ENCODE measurements at regions of chr3 and their contacts with region 1.

Region 1: DNA sequence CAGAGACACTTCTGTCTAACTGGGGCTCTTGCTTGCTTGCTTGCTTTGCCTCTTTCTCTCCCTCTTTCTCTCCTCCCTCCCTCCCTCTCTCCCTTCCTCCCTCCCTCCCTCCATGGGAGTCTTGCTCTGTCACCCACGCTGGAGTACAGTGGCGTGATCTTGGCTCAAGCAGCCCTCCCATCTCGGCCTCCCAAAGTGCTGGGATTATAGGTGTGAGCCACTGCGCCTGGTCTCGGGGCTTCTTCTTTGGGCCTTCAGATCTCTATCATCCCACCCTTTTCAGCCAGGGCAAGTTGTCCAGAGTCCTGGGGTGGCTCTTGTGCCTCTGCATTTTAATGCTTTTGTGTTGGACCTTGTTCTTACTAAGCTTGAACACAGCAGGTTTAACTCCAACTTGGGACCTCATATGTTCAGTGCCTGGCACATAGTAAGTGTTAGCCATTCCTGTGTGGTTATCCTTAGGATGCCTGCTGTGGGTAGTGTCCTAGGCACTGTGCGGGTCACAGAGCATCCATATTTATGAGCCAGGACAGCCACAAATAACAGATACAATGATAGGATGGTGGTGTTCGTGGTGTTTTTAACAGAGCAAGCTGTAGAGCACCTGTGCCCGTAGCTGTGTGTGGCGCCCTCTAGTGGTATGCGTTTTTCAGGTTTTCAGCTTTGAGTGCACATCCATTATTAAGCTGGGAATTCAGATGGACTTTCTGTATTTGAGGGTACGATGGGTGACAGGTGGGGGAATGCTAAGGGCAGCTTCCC is 75.1 kb downstream of the CCK start:
- DNase-seq: peak; percentile 30 to 70 (median 57)
- ATAC-seq: peak; percentile 75
- H3K4me3 ChIP-seq: no peak overlapping the region
- H3K4me3 Mint-ChIP-seq: no peak overlapping the region
- H3K27ac ChIP-seq: no peak overlapping the region
- H3K27ac Mint-ChIP-seq: peak overlapping the region in 5 of 9 donors; percentile 22 to 69 (median 25)
- H3K4me1 ChIP-seq: peaks cover 5 to 9% of the 10 kb centered on the region in 2 donors
- H3K4me1 Mint-ChIP-seq: peaks cover 8 to 38% (median 15%) of the 10 kb centered on the region in 7 donors
- H3K27me3 ChIP-seq: no peaks in the 10 kb centered on the region
- H3K27me3 Mint-ChIP-seq: no peaks in the 10 kb centered on the region

Region 2: DNA sequence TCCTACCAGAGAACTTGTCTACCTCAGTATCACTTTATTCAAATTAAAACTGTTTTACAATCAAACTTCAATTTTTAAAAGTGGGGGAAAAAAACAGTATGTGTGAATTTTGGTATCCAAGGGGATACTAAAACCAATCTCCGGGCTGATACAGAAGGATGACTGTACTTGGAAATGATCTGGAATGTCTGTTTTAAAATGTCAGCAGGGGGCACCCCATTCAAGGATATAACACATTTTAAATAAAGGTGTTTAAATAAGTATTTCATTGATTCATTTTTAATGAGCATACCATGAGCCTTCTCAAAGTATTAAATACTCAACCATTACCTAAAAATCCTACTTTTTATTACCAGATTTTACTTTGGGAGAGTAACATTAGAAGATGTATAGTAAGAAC is 296.9 kb before region 1 on chr3:
- CTCF ChIA-PET with region 1: interaction called, 4 read pairs
- POLR2A ChIA-PET with region 1: no interaction called
- intact Hi-C with region 1: loop called (anchors 1 kb)
- DNase-seq: peak in 6 of 9 donors; percentile 9 to 34 (median 17)
- ATAC-seq: no peak
- H3K4me3 ChIP-seq: no peak overlapping the region
- H3K4me3 Mint-ChIP-seq: no peak overlapping the region
- H3K27ac ChIP-seq: no peak overlapping the region
- H3K27ac Mint-ChIP-seq: no peak overlapping the region
- H3K4me1 ChIP-seq: no peaks in the 10 kb centered on the region
- H3K4me1 Mint-ChIP-seq: peaks cover 0 to 6% (median 0%) of the 10 kb centered on the region in 7 donors
- H3K27me3 ChIP-seq: no peaks in the 10 kb centered on the region
- H3K27me3 Mint-ChIP-seq: no peaks in the 10 kb centered on the region

Region 3: DNA sequence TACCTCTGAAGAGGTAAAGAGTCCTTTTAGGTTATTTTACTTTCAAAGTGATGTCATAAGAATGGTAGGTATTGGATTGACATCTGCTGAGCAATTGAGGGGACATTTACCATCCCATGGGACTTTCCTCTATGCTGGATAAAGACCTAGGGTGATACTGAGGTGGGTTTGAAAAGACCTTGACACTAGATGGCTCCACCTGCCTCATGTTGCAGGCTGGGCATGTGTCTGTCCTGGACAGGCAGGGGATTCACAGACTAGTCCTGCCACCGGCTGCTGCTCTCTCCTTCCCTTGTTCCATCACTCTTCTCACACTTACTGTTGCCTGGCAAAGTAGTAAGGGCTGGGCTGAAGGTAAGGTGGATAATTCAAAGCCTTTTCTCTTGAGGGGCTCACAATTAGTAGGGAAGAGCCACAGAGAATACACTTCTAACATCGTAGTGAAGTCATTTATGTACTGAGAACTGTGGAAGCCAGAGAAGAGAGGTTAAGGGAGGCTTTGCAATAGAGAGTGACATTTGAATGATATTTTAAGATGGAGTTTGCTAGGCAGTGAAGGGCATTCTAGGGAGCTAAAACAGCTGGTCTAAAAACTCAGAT is 72.0 kb before region 1 on chr3:
- CTCF ChIA-PET with region 1: interaction called, 8 read pairs
- POLR2A ChIA-PET with region 1: no interaction called
- intact Hi-C with region 1: loop called (anchors 1 kb)
- DNase-seq: peak in 1 of 9 donors; percentile 11
- ATAC-seq: peak; percentile 27
- H3K4me3 ChIP-seq: no peak overlapping the region
- H3K4me3 Mint-ChIP-seq: no peak overlapping the region
- H3K27ac ChIP-seq: no peak overlapping the region
- H3K27ac Mint-ChIP-seq: peak overlapping the region in 3 of 9 donors; percentile 7 to 60 (median 51)
- H3K4me1 ChIP-seq: no peaks in the 10 kb centered on the region
- H3K4me1 Mint-ChIP-seq: peaks cover 6 to 36% (median 19%) of the 10 kb centered on the region in 7 donors
- H3K27me3 ChIP-seq: no peaks in the 10 kb centered on the region
- H3K27me3 Mint-ChIP-seq: no peaks in the 10 kb centered on the region

Region 4: DNA sequence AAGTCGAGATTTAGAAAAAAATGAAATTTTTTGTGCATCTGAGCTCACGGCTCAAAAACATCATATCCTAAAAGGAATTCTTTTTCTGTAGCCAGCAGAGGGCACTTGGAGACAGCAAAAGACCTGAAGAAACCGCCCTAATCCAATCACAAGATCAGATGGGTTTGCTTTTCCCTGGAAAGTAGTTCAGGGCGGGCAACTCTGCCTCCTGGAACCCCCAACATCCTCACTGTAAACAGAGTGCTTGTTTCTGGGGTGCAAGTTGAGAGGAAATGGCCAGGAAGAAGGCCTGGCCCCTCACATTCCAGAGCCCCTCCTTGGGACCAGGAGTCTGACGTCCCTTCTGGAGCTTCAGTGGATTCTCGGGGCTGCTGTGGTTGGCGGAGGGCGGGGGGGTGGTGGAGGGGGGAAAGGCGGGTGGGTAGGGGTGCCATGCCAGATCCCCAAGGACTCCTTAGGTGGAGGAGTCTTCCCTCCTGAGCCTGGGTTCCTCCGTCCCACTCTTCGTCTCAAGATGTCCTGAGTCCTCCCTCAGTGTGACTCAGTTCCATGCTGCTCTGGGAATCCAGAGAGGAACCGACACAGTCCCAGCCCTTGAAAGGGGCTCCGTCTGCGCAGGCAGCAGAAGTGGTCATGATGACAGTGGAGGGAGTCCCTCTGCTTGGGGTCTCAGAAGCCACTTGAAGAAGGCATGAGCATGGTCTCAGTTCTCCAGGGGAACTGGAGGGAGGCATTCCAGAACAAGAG is 39.2 kb after region 1 on chr3:
- CTCF ChIA-PET with region 1: interaction called, 8 read pairs
- POLR2A ChIA-PET with region 1: no interaction called
- intact Hi-C with region 1: loop called in 1 of 2 experiments (anchors 1 kb)
- DNase-seq: no peak
- ATAC-seq: no peak
- H3K4me3 ChIP-seq: no peak overlapping the region
- H3K4me3 Mint-ChIP-seq: no peak overlapping the region
- H3K27ac ChIP-seq: no peak overlapping the region
- H3K27ac Mint-ChIP-seq: no peak overlapping the region
- H3K4me1 ChIP-seq: no peaks in the 10 kb centered on the region
- H3K4me1 Mint-ChIP-seq: peaks cover 0 to 3% (median 0%) of the 10 kb centered on the region in 7 donors
- H3K27me3 ChIP-seq: no peaks in the 10 kb centered on the region
- H3K27me3 Mint-ChIP-seq: peaks cover 11 to 20% (median 13%) of the 10 kb centered on the region in 5 donors

Region 5: GRCh38 chr3:43523454-43524053 is 1332.7 kb after region 1 on chr3:
- CTCF ChIA-PET with region 1: no interaction called
- POLR2A ChIA-PET with region 1: no interaction called
- intact Hi-C with region 1: no loop called
- DNase-seq: no peak
- ATAC-seq: no peak
- H3K4me3 ChIP-seq: no peak overlapping the region
- H3K4me3 Mint-ChIP-seq: no peak overlapping the region
- H3K27ac ChIP-seq: no peak overlapping the region
- H3K27ac Mint-ChIP-seq: no peak overlapping the region
- H3K4me1 ChIP-seq: no peaks in the 10 kb centered on the region
- H3K4me1 Mint-ChIP-seq: no peaks in the 10 kb centered on the region
- H3K27me3 ChIP-seq: no peaks in the 10 kb centered on the region
- H3K27me3 Mint-ChIP-seq: no peaks in the 10 kb centered on the region